ENCODE measurements at regions of chr1 and their contacts with region 1.

Region 1: DNA sequence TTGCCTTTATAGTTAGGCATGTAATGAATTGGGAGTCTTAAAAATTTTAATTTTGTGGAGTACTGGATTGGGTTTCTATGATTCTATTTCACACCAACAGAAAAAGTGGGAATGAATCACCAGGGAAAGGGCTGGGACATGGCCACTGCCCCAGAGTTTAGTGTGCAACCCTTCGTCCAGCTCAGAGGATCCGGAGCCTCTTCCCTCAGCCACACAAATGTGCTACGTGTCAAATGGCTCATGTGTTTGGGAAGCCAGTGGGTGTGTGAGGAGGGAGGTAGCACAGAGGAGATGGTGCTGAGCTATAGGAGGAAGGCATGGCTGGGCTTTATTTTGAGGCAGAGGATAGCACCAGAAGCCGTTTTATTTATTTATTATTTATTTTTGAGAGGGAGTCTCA is 247.3 kb downstream of the SIPA1L2 start:
- DNase-seq: no peak
- ATAC-seq: no peak
- H3K4me3 ChIP-seq: no peak overlapping the region
- H3K27ac ChIP-seq: no peak overlapping the region
- H3K4me1 ChIP-seq: no peaks in the 10 kb centered on the region; the same call in 1 of the 2 replicates
- H3K27me3 ChIP-seq: no peaks in the 10 kb centered on the region
- CTCF ChIP-seq: no peak

Region 2: DNA sequence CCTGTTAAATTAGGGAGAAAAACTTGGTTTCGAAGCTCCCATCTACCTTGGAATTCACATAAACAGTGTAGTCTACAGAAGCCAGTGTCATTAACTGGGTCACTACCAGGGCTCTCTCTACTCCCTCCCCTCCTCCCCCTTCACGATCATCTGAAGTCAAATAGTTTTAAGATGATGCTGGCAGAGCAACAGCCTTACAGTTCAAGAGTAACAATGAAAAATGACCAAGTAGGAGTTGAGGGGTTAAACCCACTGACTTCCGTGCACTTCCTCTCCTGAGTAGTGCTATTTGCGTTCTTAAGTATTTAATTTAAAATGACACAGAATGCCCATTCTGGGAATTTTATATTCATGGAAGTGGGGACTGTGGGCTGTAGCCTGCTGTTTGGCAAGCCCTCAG is 10.3 kb after region 1 on chr1:
- CTCF ChIA-PET with region 1: no interaction called
- POLR2A ChIA-PET with region 1: interaction called, 12 read pairs
- in situ Hi-C with region 1: no loop called
- intact Hi-C with region 1: no loop called
- DNase-seq: no peak
- ATAC-seq: no peak
- H3K4me3 ChIP-seq: no peak overlapping the region
- H3K27ac ChIP-seq: no peak overlapping the region
- H3K4me1 ChIP-seq: no peaks in the 10 kb centered on the region
- H3K27me3 ChIP-seq: no peaks in the 10 kb centered on the region
- CTCF ChIP-seq: no peak